ENCODE measurements at regions of chrX and their contacts with region 1.

Region 1: GRCh38 chrX:24259544-24260240 is 54.2 kb downstream of the SUPT20HL2 start:
- DNase-seq: peak in 2 of 5 donors; percentile 9 to 20
- ATAC-seq: peak in 1 of 4 donors; percentile 39
- H3K4me3 ChIP-seq: no peak overlapping the region
- H3K27ac ChIP-seq: no peak overlapping the region
- H3K4me1 ChIP-seq: peaks cover 0 to 11% (median 0%) of the 10 kb centered on the region in 12 donors
- H3K27me3 ChIP-seq: peaks cover 0 to 39% (median 0%) of the 10 kb centered on the region in 9 donors
- CTCF ChIP-seq: peak; percentile 18 to 61 (median 47)
- POLR2A ChIP-seq: no peak

Region 2: GRCh38 chrX:24169211-24169610 is 90.5 kb before region 1 on chrX:
- intact Hi-C with region 1: no loop called
- DNase-seq: no peak
- ATAC-seq: peak in 2 of 4 donors; percentile 36 to 37
- H3K4me3 ChIP-seq: no peak overlapping the region
- H3K27ac ChIP-seq: no peak overlapping the region
- H3K4me1 ChIP-seq: peaks cover 0 to 75% (median 35%) of the 10 kb centered on the region in 12 donors
- H3K27me3 ChIP-seq: no peaks in the 10 kb centered on the region
- CTCF ChIP-seq: no peak
- POLR2A ChIP-seq: no peak

Region 3: GRCh38 chrX:24364851-24365538 is 105.3 kb after region 1 on chrX:
- intact Hi-C with region 1: loop called in 2 of 10 experiments (anchors 10 kb)
- DNase-seq: no peak
- ATAC-seq: peak in 1 of 4 donors; percentile 17
- H3K4me3 ChIP-seq: peak overlapping the region in 4 of 12 donors; percentile 2 to 12 (median 2)
- H3K27ac ChIP-seq: no peak overlapping the region
- H3K4me1 ChIP-seq: no peaks in the 10 kb centered on the region
- H3K27me3 ChIP-seq: peaks cover 0 to 5% (median 0%) of the 10 kb centered on the region in 9 donors
- CTCF ChIP-seq: no peak
- POLR2A ChIP-seq: no peak

Region 4: GRCh38 chrX:24371391-24371972 is 111.8 kb after region 1 on chrX:
- intact Hi-C with region 1: loop called in 2 of 10 experiments (anchors 10 kb)
- DNase-seq: peak in 4 of 5 donors; percentile 35 to 61 (median 40)
- ATAC-seq: peak in 3 of 4 donors; percentile 37 to 78 (median 76)
- H3K4me3 ChIP-seq: no peak overlapping the region
- H3K27ac ChIP-seq: no peak overlapping the region
- H3K4me1 ChIP-seq: no peaks in the 10 kb centered on the region
- H3K27me3 ChIP-seq: peaks cover 0 to 31% (median 0%) of the 10 kb centered on the region in 9 donors
- CTCF ChIP-seq: peak; percentile 37 to 69 (median 52)
- POLR2A ChIP-seq: no peak

Region 5: DNA sequence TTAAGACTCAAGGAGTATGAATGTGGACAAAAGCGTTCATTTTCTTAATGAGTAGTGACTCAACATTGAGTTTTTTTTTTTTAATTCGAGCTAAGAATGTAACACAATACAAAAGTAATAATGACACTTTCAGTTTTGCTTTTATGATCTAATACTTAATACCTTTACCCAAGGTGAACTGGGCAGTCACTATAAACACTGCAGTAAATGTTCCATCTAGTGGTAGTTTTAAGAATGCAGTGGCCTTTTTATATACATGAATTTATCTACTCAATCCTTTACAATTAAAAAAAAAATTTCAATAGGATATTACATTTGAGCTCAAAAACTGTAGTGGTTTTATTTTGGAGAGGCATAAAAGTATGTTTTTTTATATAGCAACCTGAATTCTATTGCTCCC is 239.3 kb after region 1 on chrX:
- intact Hi-C with region 1: loop called in 3 of 10 experiments (anchors 10 kb)
- DNase-seq: no peak
- ATAC-seq: peak in 1 of 4 donors; percentile 39
- H3K4me3 ChIP-seq: no peak overlapping the region
- H3K27ac ChIP-seq: no peak overlapping the region
- H3K4me1 ChIP-seq: peaks cover 0 to 16% (median 5%) of the 10 kb centered on the region in 12 donors
- H3K27me3 ChIP-seq: no peaks in the 10 kb centered on the region
- CTCF ChIP-seq: peak; percentile 35 to 57 (median 48)
- POLR2A ChIP-seq: no peak

Region 6: DNA sequence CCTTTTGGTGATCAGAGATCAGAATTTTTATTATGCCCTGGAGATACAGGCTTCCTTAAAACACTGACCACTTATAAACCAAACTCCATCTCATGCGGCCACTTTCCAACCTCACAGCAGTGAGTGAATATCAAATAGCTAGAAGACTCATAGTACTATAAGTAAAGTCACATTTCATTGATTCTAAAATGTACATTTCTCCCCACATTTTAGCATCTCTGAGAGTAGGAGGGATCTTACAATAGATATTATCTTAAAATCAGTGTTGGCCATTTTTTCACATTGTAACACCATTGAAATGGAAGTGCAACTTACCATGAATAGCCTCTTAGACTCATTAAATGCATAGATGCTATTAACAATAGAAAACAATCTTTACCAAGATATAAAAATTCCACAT is 370.0 kb after region 1 on chrX:
- intact Hi-C with region 1: no loop called
- DNase-seq: no peak
- ATAC-seq: no peak
- H3K4me3 ChIP-seq: no peak overlapping the region
- H3K27ac ChIP-seq: no peak overlapping the region
- H3K4me1 ChIP-seq: no peaks in the 10 kb centered on the region
- H3K27me3 ChIP-seq: peaks cover 0 to 13% (median 0%) of the 10 kb centered on the region in 9 donors
- CTCF ChIP-seq: no peak
- POLR2A ChIP-seq: no peak

Measured in heart left ventricle (tissue), 16 donors.